A673 (cell line): ENCODE measurements at regions of chr19 and their contacts with region 1.

Region 1: GRCh38 chr19:7919610-7920518 is at the start of gene SNAPC2:
- DNase-seq: peak; percentile 97
- H3K4me3 ChIP-seq: peak within 1 kb of the TSS; percentile 71
- H3K27ac ChIP-seq: peak within 1 kb of the TSS; percentile 72
- H3K4me1 ChIP-seq: peaks cover 55% of the 10 kb centered on the region
- H3K27me3 ChIP-seq: peaks cover 12% of the 10 kb centered on the region
- CTCF ChIP-seq: no peak
- total RNA-seq, gene SNAPC2: 30.2 and 34.4 TPM in 2 replicates

Region 2: DNA sequence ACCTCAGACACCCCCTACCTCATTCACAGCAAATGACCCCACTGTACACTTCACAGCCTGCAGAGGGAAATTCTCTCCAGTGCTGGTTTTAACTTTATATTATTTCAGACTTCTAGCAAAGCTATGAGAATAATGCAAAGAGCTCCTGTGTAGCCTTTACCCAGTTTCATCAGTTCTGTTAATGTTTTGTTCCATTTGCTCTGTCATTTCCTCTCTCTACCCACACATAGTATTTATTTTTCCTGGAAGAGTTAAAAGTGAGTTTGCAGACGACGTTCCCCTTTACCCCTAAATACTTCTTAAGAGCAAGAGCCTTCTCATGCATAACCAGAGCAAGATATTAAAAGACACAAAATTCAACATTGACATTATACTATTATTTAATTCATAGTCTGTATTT is 1082.3 kb before region 1 on chr19:
- CTCF ChIA-PET with region 1: no interaction called
- POLR2A ChIA-PET with region 1: interaction called, 11 read pairs
- intact Hi-C with region 1: no loop called
- DNase-seq: no peak
- H3K4me3 ChIP-seq: no peak overlapping the region
- H3K27ac ChIP-seq: no peak overlapping the region
- H3K4me1 ChIP-seq: no peaks in the 10 kb centered on the region
- H3K27me3 ChIP-seq: no peaks in the 10 kb centered on the region
- CTCF ChIP-seq: no peak

Region 3: GRCh38 chr19:7582446-7582845 is 337.4 kb before region 1 on chr19:
- CTCF ChIA-PET with region 1: no interaction called
- POLR2A ChIA-PET with region 1: interaction called, 11 read pairs
- intact Hi-C with region 1: no loop called
- DNase-seq: no peak
- H3K4me3 ChIP-seq: no peak overlapping the region
- H3K27ac ChIP-seq: no peak overlapping the region
- H3K4me1 ChIP-seq: no peaks in the 10 kb centered on the region
- H3K27me3 ChIP-seq: peaks cover 30% of the 10 kb centered on the region
- CTCF ChIP-seq: no peak

Region 4: GRCh38 chr19:7868676-7869452 is 51.0 kb before region 1 on chr19:
- CTCF ChIA-PET with region 1: interaction called, 11 read pairs
- POLR2A ChIA-PET with region 1: no interaction called
- intact Hi-C with region 1: loop called (anchors 5 kb)
- DNase-seq: peak; percentile 91
- H3K4me3 ChIP-seq: peak overlapping the region; percentile 53
- H3K27ac ChIP-seq: peak overlapping the region; percentile 78
- H3K4me1 ChIP-seq: peaks cover 42% of the 10 kb centered on the region
- H3K27me3 ChIP-seq: no peaks in the 10 kb centered on the region
- CTCF ChIP-seq: peak; percentile 58; the same call in 1 of the 2 replicates

Region 5: DNA sequence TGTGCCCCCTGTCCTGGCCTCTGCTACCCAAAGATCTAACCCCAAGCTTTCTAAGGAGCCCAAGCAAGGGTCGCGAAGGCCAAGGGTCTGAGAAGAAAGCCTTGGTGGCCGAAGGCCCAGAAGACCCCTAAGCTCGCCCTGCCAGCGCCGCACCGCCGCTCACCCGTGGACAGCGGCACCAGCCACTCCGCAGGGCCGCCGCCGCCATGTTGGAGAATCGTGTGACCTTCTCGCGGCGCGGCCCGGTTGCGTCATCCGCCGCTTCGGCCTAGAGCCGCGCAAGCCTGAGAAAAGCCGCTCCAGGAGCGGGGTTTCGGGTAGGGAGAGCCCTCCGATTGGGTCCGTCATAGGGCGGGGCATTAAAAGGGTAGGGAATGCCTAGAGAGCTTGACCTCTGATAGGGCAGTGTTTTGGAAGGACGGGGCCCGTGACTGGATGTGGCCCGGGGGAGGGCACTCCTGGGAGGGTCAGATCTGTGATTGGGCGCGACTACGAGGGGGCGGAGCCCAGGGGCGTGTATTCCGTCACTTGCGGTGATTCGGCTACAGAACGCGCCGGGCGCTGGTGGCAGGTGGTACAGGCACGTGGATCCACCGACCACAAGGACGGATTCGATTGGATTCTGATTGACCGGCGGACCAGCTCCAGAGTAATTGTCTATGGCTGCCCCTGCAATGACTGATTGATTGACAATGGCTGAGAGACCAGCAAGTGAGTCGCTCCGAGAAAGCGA is 23.7 kb after region 1 on chr19 and contains the start of gene TIMM44:
- CTCF ChIA-PET with region 1: interaction called, 12 read pairs
- POLR2A ChIA-PET with region 1: interaction called, 4 read pairs
- intact Hi-C with region 1: no loop called
- DNase-seq: peak; percentile 100
- H3K4me3 ChIP-seq: peak within 1 kb of the TSS; percentile 94
- H3K27ac ChIP-seq: peak within 1 kb of the TSS; percentile 99
- H3K4me1 ChIP-seq: peaks cover 3% of the 10 kb centered on the region
- H3K27me3 ChIP-seq: no peaks in the 10 kb centered on the region
- CTCF ChIP-seq: no peak
- total RNA-seq, gene TIMM44: 153 and 169 TPM in 2 replicates